MCF 10A (cell line): ENCODE measurements at regions of chr11 and their contacts with region 1.

Region 1: DNA sequence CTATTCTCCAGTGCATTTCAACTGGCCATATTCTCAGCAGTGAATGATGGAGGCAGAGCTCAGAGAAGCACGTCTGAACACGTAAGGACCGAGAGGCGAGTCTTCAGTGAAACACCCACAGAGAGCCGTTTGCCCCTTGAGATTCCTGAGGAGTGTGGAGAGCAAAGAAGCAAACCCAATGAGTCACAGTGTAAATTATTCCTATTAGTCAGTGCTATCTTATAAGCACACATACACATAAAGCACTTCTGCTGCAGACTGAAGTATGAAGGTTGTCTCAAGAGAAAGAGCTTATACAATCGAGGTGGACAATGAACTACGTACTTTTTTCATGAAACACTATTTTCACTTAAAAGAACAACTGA is 37.4 kb downstream of the GALNT18 start:
- DNase-seq: peak; percentile 87
- H3K4me3 Mint-ChIP-seq: peak overlapping the region; percentile 20
- H3K27ac Mint-ChIP-seq: peak overlapping the region; percentile 1
- H3K4me1 Mint-ChIP-seq: peaks cover 40% of the 10 kb centered on the region
- H3K27me3 Mint-ChIP-seq: no peaks in the 10 kb centered on the region
- CTCF ChIP-seq: no peak

Region 2: DNA sequence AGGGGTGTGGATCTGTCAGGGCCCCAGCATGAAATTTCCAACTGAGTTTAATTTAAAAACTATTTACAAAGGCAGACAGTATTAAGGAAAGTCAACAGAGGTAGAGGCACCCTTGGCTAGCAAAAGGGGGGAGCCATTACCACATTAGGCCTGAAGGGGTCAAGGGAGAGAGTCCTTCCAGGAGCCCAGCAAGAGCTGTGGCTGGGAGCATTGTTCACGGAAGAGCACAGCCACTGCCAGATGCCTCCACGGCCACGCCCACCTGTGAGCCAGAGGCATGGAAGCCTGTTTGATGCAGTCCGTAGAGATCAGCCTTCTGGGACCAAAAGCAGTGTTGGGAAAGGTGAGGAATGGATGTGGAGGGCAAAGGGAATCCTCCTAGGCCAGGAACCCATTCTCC is 65.2 kb before region 1 on chr11:
- CTCF ChIA-PET with region 1: no interaction called
- POLR2A ChIA-PET with region 1: no interaction called
- intact Hi-C with region 1: no loop called
- DNase-seq: peak; percentile 11
- H3K4me3 Mint-ChIP-seq: no peak overlapping the region
- H3K27ac Mint-ChIP-seq: no peak overlapping the region
- H3K4me1 Mint-ChIP-seq: no peaks in the 10 kb centered on the region
- H3K27me3 Mint-ChIP-seq: no peaks in the 10 kb centered on the region
- CTCF ChIP-seq: no peak

Region 3: GRCh38 chr11:11569936-11570491 is 14.4 kb before region 1 on chr11:
- CTCF ChIA-PET with region 1: interaction called, 12 read pairs
- POLR2A ChIA-PET with region 1: interaction called, 41 read pairs
- intact Hi-C with region 1: no loop called
- DNase-seq: peak; percentile 69
- H3K4me3 Mint-ChIP-seq: no peak overlapping the region
- H3K27ac Mint-ChIP-seq: no peak overlapping the region
- H3K4me1 Mint-ChIP-seq: peaks cover 34% of the 10 kb centered on the region
- H3K27me3 Mint-ChIP-seq: no peaks in the 10 kb centered on the region
- CTCF ChIP-seq: no peak